Endothelial cell of umbilical vein (primary cell): ENCODE measurements at regions of chr9 and their contacts with region 1.

Region 1: GRCh38 chr9:134449221-134449894 is 123.1 kb downstream of the RXRA start:
- DNase-seq: peak; percentile 92
- H3K4me3 ChIP-seq: no peak overlapping the region
- H3K27ac ChIP-seq: no peak overlapping the region
- H3K4me1 ChIP-seq: no peaks in the 10 kb centered on the region
- H3K27me3 ChIP-seq: no peaks in the 10 kb centered on the region
- CTCF ChIP-seq: peak; percentile 90 to 92
- POLR2A ChIP-seq: no peak

Region 2: DNA sequence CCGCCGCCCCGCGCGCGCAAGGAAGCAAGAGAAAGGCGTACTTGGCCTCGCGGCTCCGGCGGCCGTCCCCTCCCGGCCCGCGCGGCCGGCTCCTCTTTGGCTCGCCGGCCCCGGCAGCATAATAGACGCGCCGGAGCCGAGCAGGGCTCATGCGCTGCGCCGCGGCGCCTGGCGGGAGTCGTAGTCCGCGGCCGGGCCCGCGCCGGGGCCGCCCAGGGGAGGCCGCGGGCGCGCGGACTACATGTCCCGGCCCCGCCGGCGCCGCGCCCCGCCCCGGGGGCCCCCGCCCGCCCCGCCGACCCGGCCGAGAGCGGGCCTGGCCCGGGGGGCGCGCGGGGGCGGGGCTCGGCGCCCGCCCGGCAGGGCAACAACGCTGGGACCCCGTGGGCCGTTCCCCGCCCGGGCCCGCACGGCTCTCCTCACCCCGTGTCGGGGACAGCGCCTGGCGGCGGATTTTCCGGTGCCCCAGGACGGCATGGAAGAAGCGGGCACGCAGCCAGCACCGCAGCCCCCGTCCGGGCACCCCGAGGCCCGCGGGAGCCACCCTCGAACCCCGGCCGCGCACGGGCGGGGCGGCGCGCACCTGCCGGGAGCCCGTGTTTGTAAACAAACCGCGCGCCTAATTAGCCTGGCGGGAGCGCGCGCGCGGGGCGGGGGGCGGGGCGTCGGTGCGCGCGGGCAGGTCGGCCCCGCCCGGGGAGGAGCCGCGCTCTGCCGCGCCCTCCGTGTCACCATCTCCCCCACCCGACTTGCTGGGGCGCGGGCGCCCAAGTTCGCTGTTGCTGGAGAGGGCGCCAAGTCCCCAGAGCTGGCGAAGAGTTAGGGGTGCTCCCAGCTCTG is 381.2 kb before region 1 on chr9 and contains the start of gene BRD3:
- CTCF ChIA-PET with region 1: no interaction called
- POLR2A ChIA-PET with region 1: no interaction called
- dilution Hi-C with region 1: no loop called
- intact Hi-C with region 1: loop called (anchors 10 kb)
- DNase-seq: peak; percentile 80
- H3K4me3 ChIP-seq: peak within 1 kb of the TSS; percentile 74 to 92 (median 79)
- H3K27ac ChIP-seq: peak within 1 kb of the TSS; percentile 55
- H3K4me1 ChIP-seq: peaks cover 12% of the 10 kb centered on the region
- H3K27me3 ChIP-seq: peaks cover 14 to 28% of the 10 kb centered on the region in 2 experiments
- CTCF ChIP-seq: no peak
- POLR2A ChIP-seq: peak; percentile 63
- total RNA-seq, gene BRD3: 47.1 and 54.1 TPM in 2 replicates

Region 3: GRCh38 chr9:134407123-134407808 is 42.1 kb before region 1 on chr9:
- CTCF ChIA-PET with region 1: no interaction called
- POLR2A ChIA-PET with region 1: no interaction called
- dilution Hi-C with region 1: no loop called
- intact Hi-C with region 1: no loop called
- DNase-seq: peak; percentile 94
- H3K4me3 ChIP-seq: no peak overlapping the region
- H3K27ac ChIP-seq: peak overlapping the region; percentile 94
- H3K4me1 ChIP-seq: peaks cover 47% of the 10 kb centered on the region
- H3K27me3 ChIP-seq: no peaks in the 10 kb centered on the region
- CTCF ChIP-seq: no peak
- POLR2A ChIP-seq: no peak

Region 4: DNA sequence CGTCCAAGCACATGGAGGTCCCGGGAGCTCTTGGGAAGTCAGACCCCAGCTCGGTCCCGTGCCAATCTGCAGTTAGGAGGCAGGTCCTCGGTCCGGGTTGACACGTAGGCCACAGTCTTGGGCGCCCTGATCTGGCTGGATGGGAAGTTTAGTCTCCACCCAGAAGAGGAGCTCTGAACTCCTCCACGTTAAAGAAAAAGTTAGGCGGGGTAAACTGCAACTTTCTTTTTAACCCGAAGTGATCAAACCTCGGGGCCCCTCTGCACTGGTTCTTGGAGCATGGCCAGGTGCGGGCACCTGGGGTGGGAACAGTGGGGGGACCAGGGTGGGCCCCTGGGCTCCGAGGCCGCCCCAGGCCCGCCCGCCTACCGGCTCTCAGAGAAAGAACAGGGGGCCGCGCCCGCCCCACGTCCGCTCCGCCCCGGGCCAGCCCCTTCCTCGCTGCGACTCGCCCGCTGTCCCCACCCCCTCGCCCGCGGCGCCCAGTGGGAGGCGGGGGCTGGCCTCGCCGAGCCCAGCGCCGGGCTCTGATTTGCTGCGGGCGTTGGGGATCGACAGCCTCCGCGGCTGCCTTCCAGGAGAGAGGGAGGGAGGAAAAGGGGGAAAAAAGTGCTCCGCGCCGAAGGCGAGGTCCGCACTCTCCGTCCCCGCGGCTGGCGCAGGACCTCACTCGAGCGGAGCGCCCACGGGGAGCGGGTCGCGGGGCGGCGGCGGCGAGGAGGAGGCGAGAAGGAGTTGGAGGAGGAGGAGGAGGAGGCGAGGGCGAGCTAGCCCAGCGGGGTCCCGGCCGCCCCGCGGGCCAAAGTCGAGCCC is 192.0 kb after region 1 on chr9 and contains the start of gene COL5A1:
- CTCF ChIA-PET with region 1: interaction called, 22 read pairs
- POLR2A ChIA-PET with region 1: no interaction called
- dilution Hi-C with region 1: no loop called
- intact Hi-C with region 1: loop called (anchors 1 kb)
- DNase-seq: peak; percentile 93
- H3K4me3 ChIP-seq: peak within 1 kb of the TSS; percentile 80 to 83 (median 80)
- H3K27ac ChIP-seq: peak within 1 kb of the TSS; percentile 67
- H3K4me1 ChIP-seq: peaks cover 28% of the 10 kb centered on the region
- H3K27me3 ChIP-seq: no peaks in the 10 kb centered on the region
- CTCF ChIP-seq: peak in 1 of 2 donors; percentile 23
- POLR2A ChIP-seq: peak; percentile 79
- total RNA-seq, gene COL5A1: 164 and 175 TPM in 2 replicates

Region 5: DNA sequence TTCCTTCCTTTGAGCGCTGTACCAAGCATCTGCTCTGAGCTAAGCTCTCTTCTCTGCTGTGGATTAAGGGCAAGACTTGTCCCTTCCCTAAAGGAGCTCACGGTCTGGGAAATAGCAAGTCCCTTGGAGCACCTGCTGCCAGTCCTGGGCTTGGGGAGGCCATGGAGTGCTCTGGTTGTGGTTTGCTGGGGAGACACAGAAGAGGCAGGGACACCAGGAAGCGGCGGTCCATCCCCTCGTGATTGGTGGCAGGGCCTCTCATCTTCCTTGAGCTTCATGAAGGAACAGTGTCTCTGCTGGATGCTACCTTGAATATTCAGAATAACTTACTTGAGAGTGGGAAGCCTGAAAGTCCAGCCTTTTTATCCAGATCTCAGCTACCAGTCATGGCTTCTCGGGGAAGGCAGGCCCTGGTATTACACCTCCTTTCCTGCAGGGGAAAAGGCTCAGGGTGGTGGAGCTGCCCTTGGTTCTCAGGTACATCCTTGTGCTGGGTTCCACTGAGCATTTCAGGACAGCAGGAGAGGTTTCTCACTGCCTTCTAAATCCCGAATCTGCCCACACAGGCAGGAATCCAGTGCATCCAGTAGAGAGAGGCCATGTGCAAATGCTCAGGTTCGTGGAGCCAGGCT is 227.6 kb after region 1 on chr9:
- CTCF ChIA-PET with region 1: interaction called, 10 read pairs
- POLR2A ChIA-PET with region 1: no interaction called
- dilution Hi-C with region 1: no loop called
- intact Hi-C with region 1: no loop called
- DNase-seq: no peak
- H3K4me3 ChIP-seq: no peak overlapping the region
- H3K27ac ChIP-seq: no peak overlapping the region
- H3K4me1 ChIP-seq: peaks cover 14% of the 10 kb centered on the region
- H3K27me3 ChIP-seq: no peaks in the 10 kb centered on the region
- CTCF ChIP-seq: no peak
- POLR2A ChIP-seq: no peak

Region 6: DNA sequence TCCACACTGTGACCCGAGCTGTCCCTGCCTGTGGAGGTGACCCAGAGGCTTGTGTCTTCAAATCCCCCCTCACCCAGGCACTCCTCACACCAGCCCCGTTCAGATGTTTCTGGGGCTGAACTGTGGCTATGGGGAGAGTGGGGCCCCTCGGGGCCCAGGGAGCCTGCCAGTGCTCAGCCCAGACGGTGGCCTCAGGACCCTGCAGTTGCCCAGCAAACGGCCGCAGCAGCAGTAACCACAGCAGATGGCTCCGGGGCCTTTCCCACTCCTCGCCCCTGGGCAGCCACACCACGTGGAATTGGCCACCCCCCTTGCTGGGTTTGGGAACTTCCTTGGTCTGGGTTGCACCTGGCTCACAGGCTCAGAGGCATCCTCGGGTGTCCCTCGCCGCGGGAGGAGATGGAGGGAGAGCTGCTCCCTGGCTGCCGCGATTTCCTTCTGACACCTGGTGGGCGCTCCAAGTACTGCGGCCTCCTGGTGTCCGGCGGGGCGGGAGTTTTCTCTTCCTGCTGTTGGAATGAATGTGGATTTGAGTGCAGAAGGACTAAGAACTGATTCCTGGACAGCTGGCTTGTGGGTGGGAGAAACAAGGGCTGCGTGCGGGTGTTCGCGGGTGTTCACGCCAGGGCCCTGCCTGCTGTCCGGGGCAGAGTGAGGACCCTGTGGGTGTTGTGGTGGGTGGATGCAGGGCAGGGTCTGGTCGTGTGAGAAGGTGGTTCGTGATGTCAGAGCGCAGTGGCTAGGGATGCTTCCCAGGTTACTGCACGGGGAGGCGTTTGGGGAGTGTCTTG is 289.7 kb after region 1 on chr9:
- CTCF ChIA-PET with region 1: interaction called, 85 read pairs
- POLR2A ChIA-PET with region 1: no interaction called
- dilution Hi-C with region 1: no loop called
- intact Hi-C with region 1: loop called (anchors 1 kb)
- DNase-seq: peak; percentile 43
- H3K4me3 ChIP-seq: no peak overlapping the region
- H3K27ac ChIP-seq: no peak overlapping the region
- H3K4me1 ChIP-seq: no peaks in the 10 kb centered on the region
- H3K27me3 ChIP-seq: no peaks in the 10 kb centered on the region
- CTCF ChIP-seq: peak; percentile 71 to 87
- POLR2A ChIP-seq: no peak

Region 7: GRCh38 chr9:135210676-135211523 is 761.5 kb after region 1 on chr9:
- CTCF ChIA-PET with region 1: no interaction called
- POLR2A ChIA-PET with region 1: no interaction called
- dilution Hi-C with region 1: no loop called
- intact Hi-C with region 1: no loop called
- DNase-seq: no peak
- H3K4me3 ChIP-seq: no peak overlapping the region
- H3K27ac ChIP-seq: no peak overlapping the region
- H3K4me1 ChIP-seq: no peaks in the 10 kb centered on the region
- H3K27me3 ChIP-seq: no peaks in the 10 kb centered on the region
- CTCF ChIP-seq: no peak
- POLR2A ChIP-seq: no peak

Region 8: GRCh38 chr9:135410831-135411473 is 961.6 kb after region 1 on chr9:
- CTCF ChIA-PET with region 1: interaction called, 11 read pairs
- POLR2A ChIA-PET with region 1: no interaction called
- dilution Hi-C with region 1: no loop called
- intact Hi-C with region 1: no loop called
- DNase-seq: no peak
- H3K4me3 ChIP-seq: no peak overlapping the region
- H3K27ac ChIP-seq: no peak overlapping the region
- H3K4me1 ChIP-seq: no peaks in the 10 kb centered on the region
- H3K27me3 ChIP-seq: no peaks in the 10 kb centered on the region
- CTCF ChIP-seq: no peak
- POLR2A ChIP-seq: no peak